Ovary (tissue), 10 donors: ENCODE measurements at regions of chr3 and their contacts with region 1.

Region 1: DNA sequence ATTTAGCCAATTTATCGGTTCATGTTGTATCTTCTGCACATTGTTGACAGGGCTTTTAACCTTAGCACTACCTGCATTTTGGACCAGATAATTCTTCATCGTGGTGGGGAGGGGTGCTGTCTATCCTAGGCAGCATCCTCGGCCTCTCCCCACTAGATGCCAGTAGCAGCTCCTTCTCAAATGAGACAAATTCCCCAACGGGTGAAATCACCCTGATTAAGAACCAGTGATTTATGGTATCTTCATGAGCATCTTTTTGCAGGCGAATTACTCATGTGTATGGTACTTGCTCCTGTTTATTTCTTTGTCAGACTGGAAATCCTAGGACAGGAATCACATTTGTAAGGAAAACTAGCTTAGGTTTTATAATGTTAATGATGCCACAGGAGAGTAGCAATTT is 68.0 kb downstream of the C3orf70 start:
- DNase-seq: no peak
- H3K4me3 ChIP-seq: no peak overlapping the region
- H3K27ac ChIP-seq: no peak overlapping the region
- H3K4me1 ChIP-seq: peaks cover 1% of the 10 kb centered on the region
- H3K27me3 ChIP-seq: no peaks in the 10 kb centered on the region
- CTCF ChIP-seq: no peak
- EP300 ChIP-seq: no peak
- POLR2A ChIP-seq: no peak

Region 2: DNA sequence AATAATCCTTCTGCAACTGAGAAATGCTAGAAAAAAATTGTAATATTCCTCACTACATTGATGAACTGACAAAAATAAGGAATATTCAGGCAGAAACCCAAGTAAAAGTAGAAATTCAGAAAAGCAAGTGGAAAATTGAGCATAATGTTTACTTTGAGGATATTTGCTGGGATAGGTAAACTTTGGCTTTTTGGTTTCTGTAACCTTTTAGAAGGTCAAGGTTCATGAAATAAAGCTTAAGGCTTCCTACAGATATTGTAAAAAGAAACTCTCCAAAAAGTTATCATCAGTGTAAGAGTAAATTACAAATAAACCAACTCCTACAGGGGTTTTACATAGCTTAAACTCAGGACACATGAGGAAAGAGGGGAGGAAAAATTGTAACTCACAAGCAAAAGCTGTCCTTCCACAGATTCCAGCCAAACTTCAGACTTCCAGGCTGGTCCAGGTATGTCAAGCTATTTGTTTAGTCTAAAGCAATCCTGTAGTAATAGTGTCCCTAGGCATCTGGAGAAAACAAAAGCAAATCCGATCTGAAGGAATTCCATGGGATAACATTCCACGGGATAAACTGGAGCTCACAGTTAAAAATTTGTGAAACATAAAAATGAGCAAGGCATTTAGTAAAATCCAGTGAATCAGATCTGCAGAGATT is 46.8 kb after region 1 on chr3:
- intact Hi-C with region 1: no loop called
- DNase-seq: no peak
- H3K4me3 ChIP-seq: no peak overlapping the region
- H3K27ac ChIP-seq: no peak overlapping the region
- H3K4me1 ChIP-seq: no peaks in the 10 kb centered on the region
- H3K27me3 ChIP-seq: no peaks in the 10 kb centered on the region
- CTCF ChIP-seq: no peak
- EP300 ChIP-seq: no peak
- POLR2A ChIP-seq: no peak

Region 3: GRCh38 chr3:185152410-185153210 is 67.7 kb after region 1 on chr3 and contains the start of gene C3orf70:
- intact Hi-C with region 1: loop called in 1 of 4 experiments (anchors 10 kb)
- DNase-seq: peak; percentile 65 to 86 (median 78)
- H3K4me3 ChIP-seq: peak within 1 kb of the TSS; percentile 67
- H3K27ac ChIP-seq: peak within 1 kb of the TSS; percentile 65 to 82
- H3K4me1 ChIP-seq: peaks cover 1% of the 10 kb centered on the region
- H3K27me3 ChIP-seq: no peaks in the 10 kb centered on the region
- CTCF ChIP-seq: no peak
- EP300 ChIP-seq: no peak
- POLR2A ChIP-seq: peak; percentile 10
- total RNA-seq, gene C3orf70: 3.8 to 17.7 (median 7.6) TPM

Region 4: DNA sequence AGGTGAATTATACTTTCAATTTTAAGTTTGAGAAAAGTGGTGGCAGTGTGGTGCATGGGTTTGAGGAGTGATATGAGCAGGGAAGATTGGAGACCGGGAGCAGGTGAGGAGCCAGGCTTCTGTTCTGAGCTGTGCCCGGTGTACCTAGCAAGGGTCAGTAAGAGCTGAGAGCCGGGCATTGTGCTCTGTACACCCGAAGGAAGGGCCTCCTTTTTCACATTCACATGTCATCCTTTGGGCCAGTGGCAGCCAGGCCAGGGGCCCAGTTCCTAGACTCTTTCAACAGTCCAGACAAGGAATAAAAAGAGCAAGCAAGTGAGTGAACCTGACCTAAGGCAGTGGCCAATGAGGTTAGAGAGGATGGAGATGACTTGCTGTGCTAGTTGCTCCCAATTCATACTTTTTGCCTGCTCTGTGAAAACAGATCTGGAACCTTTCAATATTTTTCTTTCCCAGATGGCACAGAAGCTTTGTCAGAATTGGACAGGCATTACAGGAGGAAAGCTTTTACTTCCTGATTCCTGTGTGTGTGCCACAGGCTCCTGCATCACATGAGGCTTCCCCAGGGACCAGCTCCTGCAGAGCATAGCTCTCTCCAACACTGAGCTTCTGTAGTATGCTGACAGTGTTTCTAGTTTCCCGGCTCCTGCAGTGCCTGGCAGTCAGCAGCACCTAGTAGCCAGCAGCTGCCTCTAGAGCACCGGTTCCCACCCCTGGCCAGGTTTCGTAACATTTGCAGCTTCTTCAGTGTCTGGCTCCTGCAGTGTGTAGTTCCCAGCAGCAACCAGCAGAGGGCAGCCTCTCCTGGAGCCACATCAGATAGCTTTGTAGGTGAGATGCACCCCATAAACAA is 858.2 kb after region 1 on chr3:
- intact Hi-C with region 1: no loop called
- DNase-seq: peak; percentile 72 to 86 (median 81)
- H3K4me3 ChIP-seq: no peak overlapping the region
- H3K27ac ChIP-seq: no peak overlapping the region
- H3K4me1 ChIP-seq: peaks cover 2% of the 10 kb centered on the region
- H3K27me3 ChIP-seq: no peaks in the 10 kb centered on the region
- CTCF ChIP-seq: peak; percentile 74 to 94 (median 82)
- EP300 ChIP-seq: no peak
- POLR2A ChIP-seq: no peak